GM12878 (cell line): ENCODE measurements at regions of chr20 and their contacts with region 1.

Region 1: GRCh38 chr20:32285621-32286371 is 8.3 kb downstream of the KIF3B start:
- DNase-seq: peak; percentile 84
- ATAC-seq: peak; percentile 85
- H3K4me3 ChIP-seq: peak overlapping the region; percentile 54
- H3K27ac ChIP-seq: peak overlapping the region; percentile 92
- H3K4me1 ChIP-seq: peaks cover 31% of the 10 kb centered on the region
- H3K27me3 ChIP-seq: no peaks in the 10 kb centered on the region
- CTCF ChIP-seq: no peak
- EP300 ChIP-seq: peak in 1 of 2 experiments; percentile 44; a peak in 1 of 4 replicates
- POLR2A ChIP-seq: peak; percentile 65
- RAD21 ChIP-seq: no peak

Region 2: DNA sequence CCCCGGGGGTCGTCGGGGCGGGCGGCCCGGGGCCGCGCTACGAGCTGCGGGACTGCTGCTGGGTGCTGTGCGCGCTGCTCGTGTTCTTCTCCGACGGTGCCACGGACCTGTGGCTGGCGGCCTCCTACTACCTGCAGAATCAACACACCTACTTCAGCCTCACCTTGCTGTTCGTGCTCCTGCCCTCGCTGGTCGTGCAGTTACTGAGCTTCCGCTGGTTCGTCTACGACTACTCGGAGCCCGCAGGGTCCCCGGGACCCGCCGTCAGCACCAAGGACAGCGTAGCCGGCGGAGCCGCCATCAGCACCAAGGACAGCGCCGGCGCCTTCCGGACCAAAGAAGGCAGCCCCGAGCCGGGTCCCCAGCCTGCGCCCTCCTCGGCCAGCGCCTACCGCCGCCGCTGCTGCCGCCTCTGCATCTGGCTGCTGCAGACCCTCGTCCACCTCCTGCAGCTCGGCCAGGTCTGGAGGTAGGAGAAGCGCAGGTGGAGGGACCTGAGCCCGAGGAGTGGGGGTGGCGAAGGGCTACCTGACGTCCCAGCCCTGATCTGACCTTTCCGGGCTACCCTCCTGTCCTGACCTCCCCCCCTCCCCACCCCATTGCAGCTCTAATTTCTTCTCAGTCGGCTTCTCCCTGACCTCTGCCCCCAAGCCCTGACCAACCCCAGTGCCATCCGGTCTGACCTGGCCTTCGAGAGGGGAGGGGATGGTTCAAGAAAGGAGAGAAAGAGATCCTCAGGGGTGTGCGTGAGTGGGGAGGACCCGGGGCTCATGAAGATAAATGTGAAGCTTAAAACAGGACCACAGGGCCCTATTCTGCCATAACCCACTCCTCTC is 317.3 kb before region 1 on chr20:
- CTCF ChIA-PET with region 1: no interaction called
- POLR2A ChIA-PET with region 1: no interaction called
- RAD21 ChIA-PET with region 1: no interaction called
- SMC1A ChIA-PET with region 1: no interaction called
- in situ Hi-C with region 1: no loop called
- intact Hi-C with region 1: no loop called
- DNase-seq: no peak
- ATAC-seq: peak; percentile 93
- H3K4me3 ChIP-seq: no peak overlapping the region
- H3K27ac ChIP-seq: no peak overlapping the region
- H3K4me1 ChIP-seq: no peaks in the 10 kb centered on the region
- H3K27me3 ChIP-seq: peaks cover 0 to 2% of the 10 kb centered on the region in 2 experiments; a peak in 3 of 4 replicates
- CTCF ChIP-seq: no peak
- EP300 ChIP-seq: no peak
- POLR2A ChIP-seq: no peak
- RAD21 ChIP-seq: no peak

Region 3: DNA sequence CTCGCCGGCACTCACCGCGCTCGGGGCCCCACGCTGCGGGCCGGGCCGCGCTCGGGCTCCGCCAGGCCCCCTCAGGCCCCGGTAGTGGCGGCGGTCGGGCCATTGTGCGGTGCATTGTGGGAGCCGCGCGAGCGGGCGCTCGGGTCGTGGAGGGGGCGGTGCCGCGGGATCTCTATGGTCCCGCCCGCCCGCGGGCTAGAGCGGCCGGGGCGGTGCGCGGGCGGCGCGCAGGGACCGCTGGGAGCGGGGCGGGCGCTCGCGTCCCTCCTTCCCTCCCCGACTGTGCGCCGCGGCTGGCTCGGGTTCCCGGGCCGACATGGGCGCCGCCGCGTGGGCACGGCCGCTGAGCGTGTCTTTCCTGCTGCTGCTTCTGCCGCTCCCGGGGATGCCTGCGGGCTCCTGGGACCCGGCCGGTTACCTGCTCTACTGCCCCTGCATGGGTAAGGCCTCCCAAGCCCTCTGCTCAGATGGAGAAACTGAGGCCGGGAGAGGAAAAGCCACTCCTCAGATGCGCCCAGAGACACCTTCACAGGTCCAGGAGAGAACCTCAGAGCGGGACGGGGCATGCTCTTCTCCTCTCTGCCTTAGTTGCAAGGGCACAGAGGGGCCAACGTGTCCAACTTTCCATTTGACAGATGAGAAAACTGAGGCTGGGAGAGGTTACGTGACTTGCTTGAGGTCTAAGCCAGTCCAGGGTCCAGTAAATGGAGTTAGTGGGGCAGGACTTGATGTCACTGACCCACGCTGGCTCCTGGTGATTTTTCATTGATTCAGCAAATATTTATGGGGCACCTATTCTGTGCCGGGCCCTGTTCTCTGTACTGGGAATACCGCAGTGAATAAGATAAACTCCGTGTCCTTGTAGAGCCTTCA is 77.9 kb before region 1 on chr20 and contains the starts of genes PLAGL2 and POFUT1:
- CTCF ChIA-PET with region 1: no interaction called
- POLR2A ChIA-PET with region 1: interaction called, 5 read pairs
- RAD21 ChIA-PET with region 1: interaction called, 22 read pairs
- SMC1A ChIA-PET with region 1: interaction called, 9 read pairs
- in situ Hi-C with region 1: no loop called
- intact Hi-C with region 1: loop called (anchors 5 kb)
- DNase-seq: peak; percentile 37
- ATAC-seq: peak; percentile 92
- H3K4me3 ChIP-seq: peak within 1 kb of the TSS; percentile 99
- H3K27ac ChIP-seq: peak within 1 kb of the TSS; percentile 84
- H3K4me1 ChIP-seq: peaks cover 20% of the 10 kb centered on the region
- H3K27me3 ChIP-seq: no peaks in the 10 kb centered on the region
- CTCF ChIP-seq: peak in 2 of 3 experiments; percentile 20 to 25; a peak in 2 of 6 replicates
- EP300 ChIP-seq: peak in 1 of 2 experiments; percentile 58; a peak in 2 of 4 replicates
- POLR2A ChIP-seq: peak; percentile 92
- RAD21 ChIP-seq: no peak
- polyA plus RNA-seq, gene PLAGL2: 4.4 to 7.3 TPM
- polyA plus RNA-seq, gene POFUT1: 2.6 to 3.9 TPM

Region 4: GRCh38 chr20:32252189-32252588 is 33.6 kb before region 1 on chr20:
- CTCF ChIA-PET with region 1: interaction called, 3 read pairs
- POLR2A ChIA-PET with region 1: no interaction called
- RAD21 ChIA-PET with region 1: interaction called, 11 read pairs
- SMC1A ChIA-PET with region 1: interaction called, 12 read pairs
- in situ Hi-C with region 1: no loop called
- intact Hi-C with region 1: no loop called
- DNase-seq: no peak
- ATAC-seq: peak; percentile 47
- H3K4me3 ChIP-seq: no peak overlapping the region
- H3K27ac ChIP-seq: no peak overlapping the region
- H3K4me1 ChIP-seq: peaks cover 8% of the 10 kb centered on the region
- H3K27me3 ChIP-seq: no peaks in the 10 kb centered on the region
- CTCF ChIP-seq: no peak
- EP300 ChIP-seq: no peak
- POLR2A ChIP-seq: no peak
- RAD21 ChIP-seq: no peak

Region 5: DNA sequence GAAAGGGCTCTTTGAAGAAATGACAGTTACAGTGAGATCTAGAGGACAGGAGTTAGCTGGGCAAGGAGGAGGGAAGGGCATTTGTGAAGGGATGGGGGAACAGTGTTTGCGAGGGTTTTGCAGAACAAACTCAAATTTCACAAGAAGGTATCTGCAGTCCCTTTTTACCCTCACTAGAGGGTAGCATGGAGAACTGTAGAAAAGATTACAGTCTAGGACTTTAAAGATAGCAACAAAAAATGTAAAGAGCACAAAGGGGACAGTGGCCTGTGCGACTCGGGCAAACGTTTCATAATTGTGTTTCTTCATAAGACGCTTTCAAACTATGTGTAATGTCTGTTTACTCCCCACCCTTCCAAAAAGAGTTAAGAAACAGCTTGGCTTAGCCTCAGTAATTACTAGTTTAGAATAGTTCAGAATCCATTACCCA is 51.1 kb after region 1 on chr20:
- CTCF ChIA-PET with region 1: interaction called, 4 read pairs
- POLR2A ChIA-PET with region 1: interaction called, 10 read pairs
- RAD21 ChIA-PET with region 1: interaction called, 28 read pairs
- SMC1A ChIA-PET with region 1: interaction called, 21 read pairs
- in situ Hi-C with region 1: no loop called
- intact Hi-C with region 1: no loop called
- DNase-seq: no peak
- ATAC-seq: peak; percentile 58
- H3K4me3 ChIP-seq: no peak overlapping the region
- H3K27ac ChIP-seq: no peak overlapping the region
- H3K4me1 ChIP-seq: peaks cover 29% of the 10 kb centered on the region
- H3K27me3 ChIP-seq: no peaks in the 10 kb centered on the region
- CTCF ChIP-seq: peak; percentile 62 to 71 (median 65)
- EP300 ChIP-seq: no peak
- POLR2A ChIP-seq: no peak
- RAD21 ChIP-seq: peak; percentile 78

Region 6: GRCh38 chr20:32357869-32358631 is 72.3 kb after region 1 on chr20 and contains the start of gene ASXL1:
- CTCF ChIA-PET with region 1: interaction called, 12 read pairs
- POLR2A ChIA-PET with region 1: interaction called, 38 read pairs
- RAD21 ChIA-PET with region 1: interaction called, 28 read pairs
- SMC1A ChIA-PET with region 1: interaction called, 23 read pairs
- in situ Hi-C with region 1: no loop called
- intact Hi-C with region 1: no loop called
- DNase-seq: peak; percentile 90
- ATAC-seq: peak; percentile 85
- H3K4me3 ChIP-seq: peak within 1 kb of the TSS; percentile 77
- H3K27ac ChIP-seq: peak within 1 kb of the TSS; percentile 91
- H3K4me1 ChIP-seq: peaks cover 29% of the 10 kb centered on the region
- H3K27me3 ChIP-seq: no peaks in the 10 kb centered on the region
- CTCF ChIP-seq: no peak
- EP300 ChIP-seq: no peak
- POLR2A ChIP-seq: peak; percentile 79
- RAD21 ChIP-seq: 0 out of 2 replicates have a peak, but pooled peaks have one; percentile 7
- polyA plus RNA-seq, gene ASXL1: 11.0 to 14.8 TPM